ENCODE measurements at regions of chr12 and their contacts with region 1.

Region 1: GRCh38 chr12:48977315-48978281 is 524 bp upstream of the WNT1 start:
- DNase-seq: peak in 1 of 2 donors; percentile 78
- ATAC-seq: peak in 6 of 8 donors; percentile 20 to 58 (median 46)
- H3K4me3 ChIP-seq: peak overlapping the region in 9 of 10 donors; percentile 5 to 52 (median 39)
- H3K27ac ChIP-seq: no peak overlapping the region
- H3K4me1 ChIP-seq: peaks cover 33 to 58% (median 40%) of the 10 kb centered on the region in 9 donors
- H3K27me3 ChIP-seq: peaks cover 46 to 100% (median 99%) of the 10 kb centered on the region in 7 donors
- CTCF ChIP-seq: peak; percentile 40 to 86 (median 77)

Region 2: GRCh38 chr12:48966177-48966895 is 11.3 kb before region 1 on chr12:
- intact Hi-C with region 1: loop called in 1 of 10 experiments (anchors 1 kb)
- DNase-seq: no peak
- ATAC-seq: no peak
- H3K4me3 ChIP-seq: no peak overlapping the region
- H3K27ac ChIP-seq: no peak overlapping the region
- H3K4me1 ChIP-seq: peaks cover 5 to 19% (median 14%) of the 10 kb centered on the region in 9 donors
- H3K27me3 ChIP-seq: peaks cover 12 to 41% (median 26%) of the 10 kb centered on the region in 7 donors
- CTCF ChIP-seq: no peak